ENCODE measurements at regions of chr3 and their contacts with region 1.

Region 1: GRCh38 chr3:196073188-196073838 is 8.6 kb downstream of the TFRC start:
- DNase-seq: no peak
- H3K4me3 ChIP-seq: no peak overlapping the region
- H3K27ac ChIP-seq: no peak overlapping the region
- H3K4me1 ChIP-seq: no peaks in the 10 kb centered on the region
- H3K27me3 ChIP-seq: no peaks in the 10 kb centered on the region
- CTCF ChIP-seq: peak; percentile 50 to 79 (median 73)
- EP300 ChIP-seq: no peak
- POLR2A ChIP-seq: no peak

Region 2: GRCh38 chr3:196096382-196096953 is 23.2 kb after region 1 on chr3:
- intact Hi-C with region 1: no loop called
- DNase-seq: peak; percentile 77
- H3K4me3 ChIP-seq: no peak overlapping the region
- H3K27ac ChIP-seq: peak overlapping the region in 3 of 4 donors; percentile 29 to 43 (median 37)
- H3K4me1 ChIP-seq: peaks cover 0 to 13% (median 10%) of the 10 kb centered on the region in 4 donors
- H3K27me3 ChIP-seq: no peaks in the 10 kb centered on the region
- CTCF ChIP-seq: no peak
- EP300 ChIP-seq: no peak
- POLR2A ChIP-seq: no peak

Region 3: GRCh38 chr3:196195664-196196265 is 122.5 kb after region 1 on chr3:
- intact Hi-C with region 1: loop called (anchors 1 kb)
- DNase-seq: no peak
- H3K4me3 ChIP-seq: no peak overlapping the region
- H3K27ac ChIP-seq: no peak overlapping the region
- H3K4me1 ChIP-seq: no peaks in the 10 kb centered on the region
- H3K27me3 ChIP-seq: no peaks in the 10 kb centered on the region
- CTCF ChIP-seq: no peak
- EP300 ChIP-seq: no peak
- POLR2A ChIP-seq: no peak

Region 4: GRCh38 chr3:196528639-196529233 is 455.4 kb after region 1 on chr3:
- intact Hi-C with region 1: loop called (anchors 5 kb)
- DNase-seq: peak; percentile 79
- H3K4me3 ChIP-seq: peak overlapping the region; percentile 25 to 57 (median 44)
- H3K27ac ChIP-seq: peak overlapping the region in 3 of 4 donors; percentile 65 to 81 (median 72)
- H3K4me1 ChIP-seq: peaks cover 0 to 7% (median 2%) of the 10 kb centered on the region in 4 donors
- H3K27me3 ChIP-seq: no peaks in the 10 kb centered on the region
- CTCF ChIP-seq: peak in 3 of 4 experiments; percentile 24 to 78 (median 53)
- EP300 ChIP-seq: no peak
- POLR2A ChIP-seq: no peak

Measured in sigmoid colon (tissue), 7 donors.